ENCODE measurements at regions of chr1 and their contacts with region 1.

Region 1: GRCh38 chr1:235328357-235329138 is at the start of gene GGPS1:
- DNase-seq: peak; percentile 96 to 98
- H3K4me3 ChIP-seq: peak within 1 kb of the TSS; percentile 95
- H3K4me3 Mint-ChIP-seq: no peak within 1 kb of the TSS
- H3K27ac Mint-ChIP-seq: no peak within 1 kb of the TSS
- H3K4me1 ChIP-seq: peaks cover 17% of the 10 kb centered on the region
- H3K4me1 Mint-ChIP-seq: peaks cover 24% of the 10 kb centered on the region
- H3K27me3 ChIP-seq: no peaks in the 10 kb centered on the region
- H3K27me3 Mint-ChIP-seq: no peaks in the 10 kb centered on the region
- CTCF ChIP-seq: no peak
- total RNA-seq, gene GGPS1: 40.4 and 45.3 TPM in 2 replicates

Region 2: GRCh38 chr1:235128456-235129328 is 199.9 kb before region 1 on chr1 and contains the start of gene TOMM20:
- CTCF ChIA-PET with region 1: no interaction called
- POLR2A ChIA-PET with region 1: no interaction called
- intact Hi-C with region 1: loop called (anchors 2 kb)
- DNase-seq: peak; percentile 98
- H3K4me3 ChIP-seq: peak within 1 kb of the TSS; percentile 81
- H3K4me3 Mint-ChIP-seq: peak within 1 kb of the TSS; percentile 100
- H3K27ac Mint-ChIP-seq: peak within 1 kb of the TSS; percentile 99
- H3K4me1 ChIP-seq: peaks cover 21% of the 10 kb centered on the region
- H3K4me1 Mint-ChIP-seq: peaks cover 15% of the 10 kb centered on the region
- H3K27me3 ChIP-seq: no peaks in the 10 kb centered on the region
- H3K27me3 Mint-ChIP-seq: no peaks in the 10 kb centered on the region
- CTCF ChIP-seq: no peak
- total RNA-seq, gene TOMM20: 131 and 137 TPM in 2 replicates

Region 3: DNA sequence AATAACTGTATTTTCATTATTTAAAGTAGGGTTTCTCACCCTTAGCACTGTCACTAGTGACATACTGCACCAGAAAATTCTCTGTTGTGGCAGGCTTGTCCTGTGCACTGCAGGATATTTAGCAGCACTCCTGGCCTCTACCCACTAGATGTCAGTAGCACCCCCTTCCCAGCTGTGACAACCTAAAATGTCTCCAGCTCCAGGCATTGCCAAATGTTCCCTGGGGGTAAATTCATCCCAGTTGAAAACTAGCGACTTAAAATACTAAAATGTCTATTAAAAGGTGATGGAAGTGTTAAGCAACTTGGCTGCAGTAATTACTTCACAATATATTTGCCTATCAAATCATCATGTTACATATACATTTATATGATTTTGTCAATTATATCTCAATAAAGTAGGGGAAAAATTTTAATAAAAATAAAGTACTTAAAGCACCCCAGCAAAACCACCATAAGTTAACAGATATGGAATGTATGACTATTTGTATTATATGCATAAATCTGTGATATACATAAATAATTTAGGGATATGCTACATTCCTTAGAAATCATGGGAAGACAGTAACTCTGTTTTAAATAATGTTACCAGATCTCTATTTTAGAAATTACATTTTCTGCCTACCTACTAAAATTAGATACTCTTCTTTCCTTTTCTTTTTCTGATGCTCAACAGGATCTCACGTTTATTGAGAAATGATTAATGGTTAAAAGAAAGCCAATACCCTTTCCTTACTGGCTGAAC is 75.2 kb before region 1 on chr1:
- CTCF ChIA-PET with region 1: interaction called, 5 read pairs
- POLR2A ChIA-PET with region 1: no interaction called
- intact Hi-C with region 1: loop called (anchors 1 kb)
- DNase-seq: peak; percentile 77 to 81
- H3K4me3 ChIP-seq: no peak overlapping the region
- H3K4me3 Mint-ChIP-seq: no peak overlapping the region
- H3K27ac Mint-ChIP-seq: no peak overlapping the region
- H3K4me1 ChIP-seq: no peaks in the 10 kb centered on the region
- H3K4me1 Mint-ChIP-seq: peaks cover 7% of the 10 kb centered on the region
- H3K27me3 ChIP-seq: no peaks in the 10 kb centered on the region
- H3K27me3 Mint-ChIP-seq: no peaks in the 10 kb centered on the region
- CTCF ChIP-seq: peak; percentile 84 to 92

Region 4: DNA sequence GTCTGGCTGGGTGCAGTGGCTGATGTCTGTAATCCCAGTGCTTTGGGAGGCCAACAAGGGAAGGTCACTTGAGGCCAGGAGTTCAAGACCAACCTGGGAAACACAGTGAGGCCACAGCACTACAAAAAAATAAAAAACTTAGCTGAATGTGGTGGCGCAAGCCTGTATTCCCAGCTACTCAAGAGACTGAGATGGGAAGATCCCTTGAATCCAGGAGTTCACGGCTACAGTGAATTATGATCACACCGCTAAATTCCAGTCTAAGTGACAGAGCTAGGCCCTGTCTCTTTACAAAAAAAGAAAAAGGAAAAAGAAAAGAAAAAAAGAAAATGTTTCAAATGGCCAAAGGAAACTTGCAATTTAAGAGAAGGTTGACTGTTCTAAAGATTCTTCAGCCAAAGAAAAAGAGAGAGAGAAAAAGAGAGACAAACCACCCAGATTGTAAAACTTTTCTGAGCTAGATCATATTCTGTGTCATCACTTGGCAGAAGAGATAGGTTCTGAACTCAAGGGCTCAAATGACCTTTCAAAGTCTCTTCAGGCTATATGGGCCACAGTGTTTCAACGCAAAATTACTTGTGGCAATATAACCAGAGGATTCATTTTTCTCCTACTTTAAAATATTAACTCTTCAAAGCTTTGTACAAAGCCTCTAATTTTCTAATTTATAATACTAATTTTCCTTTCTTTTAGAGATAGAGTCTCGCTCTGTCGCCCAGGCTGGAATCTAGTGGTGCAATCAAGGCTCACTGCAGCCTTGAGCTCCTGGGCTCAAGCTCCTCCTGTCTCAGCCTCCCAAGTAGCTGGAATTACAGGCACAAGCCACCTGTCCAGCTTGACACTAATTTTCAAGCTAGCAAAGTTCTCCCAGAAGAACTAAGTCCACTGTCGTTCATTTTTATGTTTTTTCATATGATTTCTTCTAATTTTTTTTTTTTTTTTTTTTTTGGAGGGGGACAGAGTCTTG is 21.1 kb before region 1 on chr1:
- CTCF ChIA-PET with region 1: no interaction called
- POLR2A ChIA-PET with region 1: interaction called, 13 read pairs
- intact Hi-C with region 1: no loop called
- DNase-seq: no peak
- H3K4me3 ChIP-seq: no peak overlapping the region
- H3K4me3 Mint-ChIP-seq: no peak overlapping the region
- H3K27ac Mint-ChIP-seq: no peak overlapping the region
- H3K4me1 ChIP-seq: no peaks in the 10 kb centered on the region
- H3K4me1 Mint-ChIP-seq: no peaks in the 10 kb centered on the region
- H3K27me3 ChIP-seq: no peaks in the 10 kb centered on the region
- H3K27me3 Mint-ChIP-seq: no peaks in the 10 kb centered on the region
- CTCF ChIP-seq: no peak

Region 5: DNA sequence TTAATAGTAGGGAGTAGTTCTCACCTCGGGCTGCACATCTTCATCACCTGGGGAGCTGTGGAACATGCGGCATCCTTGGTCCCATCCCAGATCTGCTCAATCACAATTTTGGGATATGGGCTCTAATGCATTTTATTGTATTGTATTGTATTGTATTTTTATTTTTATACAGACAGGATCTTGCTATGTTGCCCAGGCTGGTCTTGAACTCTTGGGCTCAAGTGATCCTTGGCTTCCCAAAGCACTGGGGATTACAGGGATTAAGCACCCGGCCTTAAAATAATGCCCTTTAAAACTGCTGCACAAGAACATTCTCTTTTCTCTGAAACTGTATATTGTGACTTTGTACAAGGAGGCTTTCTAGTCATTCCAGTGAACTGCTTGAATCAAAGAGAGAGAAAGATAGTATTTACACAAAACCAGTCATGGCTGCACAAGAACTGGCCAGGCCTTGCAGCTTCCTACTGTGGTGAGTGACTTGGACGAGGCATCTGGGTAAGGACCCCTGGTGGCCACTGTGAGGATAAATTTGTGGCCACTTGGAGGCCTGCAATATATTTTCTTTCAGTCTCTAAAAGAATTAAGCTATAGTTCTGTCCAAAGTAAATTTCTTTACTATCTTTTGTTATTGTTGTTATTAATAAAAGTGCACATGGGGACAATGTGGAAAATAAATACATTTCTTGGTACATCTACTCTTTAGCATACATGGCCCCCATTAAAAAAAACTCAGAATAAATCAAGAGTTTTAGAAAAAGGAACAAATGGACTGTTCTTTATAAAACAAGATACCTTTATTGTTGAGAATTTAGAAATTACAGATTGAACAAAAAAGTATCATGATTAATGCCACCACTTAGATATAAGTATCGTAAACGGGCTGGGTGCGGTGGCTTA is 86.7 kb after region 1 on chr1:
- CTCF ChIA-PET with region 1: interaction called, 5 read pairs
- POLR2A ChIA-PET with region 1: interaction called, 5 read pairs
- intact Hi-C with region 1: loop called (anchors 1 kb)
- DNase-seq: peak; percentile 80
- H3K4me3 ChIP-seq: no peak overlapping the region
- H3K4me3 Mint-ChIP-seq: no peak overlapping the region
- H3K27ac Mint-ChIP-seq: no peak overlapping the region
- H3K4me1 ChIP-seq: no peaks in the 10 kb centered on the region
- H3K4me1 Mint-ChIP-seq: no peaks in the 10 kb centered on the region
- H3K27me3 ChIP-seq: no peaks in the 10 kb centered on the region
- H3K27me3 Mint-ChIP-seq: no peaks in the 10 kb centered on the region
- CTCF ChIP-seq: peak; percentile 84 to 91

Region 6: GRCh38 chr1:235843461-235843961 is 515.0 kb after region 1 on chr1:
- CTCF ChIA-PET with region 1: interaction called, 10 read pairs
- POLR2A ChIA-PET with region 1: no interaction called
- intact Hi-C with region 1: no loop called
- DNase-seq: peak in 1 of 2 experiments; percentile 35
- H3K4me3 ChIP-seq: no peak overlapping the region
- H3K4me3 Mint-ChIP-seq: no peak overlapping the region
- H3K27ac Mint-ChIP-seq: no peak overlapping the region
- H3K4me1 ChIP-seq: no peaks in the 10 kb centered on the region
- H3K4me1 Mint-ChIP-seq: peaks cover 12% of the 10 kb centered on the region
- H3K27me3 ChIP-seq: no peaks in the 10 kb centered on the region
- H3K27me3 Mint-ChIP-seq: peaks cover 4% of the 10 kb centered on the region
- CTCF ChIP-seq: peak; percentile 55 to 69

Measured in Caco-2 (cell line).